ENCODE measurements at regions of chr9 and their contacts with region 1.

Region 1: GRCh38 chr9:3441197-3441816 is 84.5 kb downstream of the RFX3 start:
- DNase-seq: peak; percentile 80
- H3K4me3 ChIP-seq: no peak overlapping the region
- H3K27ac ChIP-seq: no peak overlapping the region
- H3K4me1 ChIP-seq: no peaks in the 10 kb centered on the region
- H3K27me3 ChIP-seq: no peaks in the 10 kb centered on the region
- CTCF ChIP-seq: peak; percentile 42 to 63
- POLR2A ChIP-seq: no peak

Region 2: GRCh38 chr9:3181049-3181953 is 260.0 kb before region 1 on chr9:
- CTCF ChIA-PET with region 1: interaction called, 11 read pairs
- POLR2A ChIA-PET with region 1: no interaction called
- dilution Hi-C with region 1: no loop called
- intact Hi-C with region 1: no loop called
- DNase-seq: no peak
- H3K4me3 ChIP-seq: no peak overlapping the region
- H3K27ac ChIP-seq: no peak overlapping the region
- H3K4me1 ChIP-seq: no peaks in the 10 kb centered on the region
- H3K27me3 ChIP-seq: peaks cover 29 to 33% of the 10 kb centered on the region in 2 experiments
- CTCF ChIP-seq: no peak
- POLR2A ChIP-seq: no peak

Region 3: DNA sequence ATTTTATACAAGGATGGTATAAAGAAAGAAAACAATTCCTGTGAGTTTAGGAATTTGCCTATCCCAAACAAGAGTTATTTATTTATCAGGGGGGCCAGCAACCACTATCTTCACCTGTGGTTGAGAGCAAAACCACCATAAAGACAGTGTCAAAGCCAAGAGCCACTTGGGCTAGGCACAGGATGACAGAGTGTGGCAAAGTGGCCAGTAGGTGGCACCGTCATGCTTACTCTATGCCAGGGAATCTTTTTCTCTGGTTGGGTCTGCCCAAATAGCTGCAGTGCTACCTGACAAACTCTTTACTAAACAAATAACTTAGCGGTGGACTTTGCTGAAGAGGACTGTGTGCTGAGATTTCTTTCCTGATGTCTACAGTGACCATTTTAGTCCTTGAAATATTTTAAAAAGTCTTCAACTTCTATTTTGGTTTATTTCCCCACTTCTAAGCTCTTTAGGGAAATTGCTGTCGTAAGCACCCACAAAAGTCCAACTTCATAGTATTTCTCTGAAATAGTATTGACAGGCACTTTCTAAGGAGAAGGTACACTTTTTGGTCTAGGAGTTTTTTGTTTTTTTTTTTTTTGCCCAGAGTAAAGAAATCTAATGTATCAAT is 200.5 kb before region 1 on chr9:
- CTCF ChIA-PET with region 1: interaction called, 566 read pairs
- POLR2A ChIA-PET with region 1: interaction called, 5 read pairs
- dilution Hi-C with region 1: no loop called
- intact Hi-C with region 1: loop called (anchors 1 kb)
- DNase-seq: peak; percentile 67
- H3K4me3 ChIP-seq: no peak overlapping the region
- H3K27ac ChIP-seq: no peak overlapping the region
- H3K4me1 ChIP-seq: no peaks in the 10 kb centered on the region
- H3K27me3 ChIP-seq: no peaks in the 10 kb centered on the region
- CTCF ChIP-seq: peak; percentile 77 to 88
- POLR2A ChIP-seq: no peak

Region 4: GRCh38 chr9:3292311-3292710 is 149.0 kb before region 1 on chr9:
- CTCF ChIA-PET with region 1: interaction called, 15 read pairs
- POLR2A ChIA-PET with region 1: no interaction called
- dilution Hi-C with region 1: no loop called
- intact Hi-C with region 1: no loop called
- DNase-seq: no peak
- H3K4me3 ChIP-seq: no peak overlapping the region
- H3K27ac ChIP-seq: no peak overlapping the region
- H3K4me1 ChIP-seq: no peaks in the 10 kb centered on the region
- H3K27me3 ChIP-seq: no peaks in the 10 kb centered on the region
- CTCF ChIP-seq: no peak
- POLR2A ChIP-seq: no peak

Region 5: DNA sequence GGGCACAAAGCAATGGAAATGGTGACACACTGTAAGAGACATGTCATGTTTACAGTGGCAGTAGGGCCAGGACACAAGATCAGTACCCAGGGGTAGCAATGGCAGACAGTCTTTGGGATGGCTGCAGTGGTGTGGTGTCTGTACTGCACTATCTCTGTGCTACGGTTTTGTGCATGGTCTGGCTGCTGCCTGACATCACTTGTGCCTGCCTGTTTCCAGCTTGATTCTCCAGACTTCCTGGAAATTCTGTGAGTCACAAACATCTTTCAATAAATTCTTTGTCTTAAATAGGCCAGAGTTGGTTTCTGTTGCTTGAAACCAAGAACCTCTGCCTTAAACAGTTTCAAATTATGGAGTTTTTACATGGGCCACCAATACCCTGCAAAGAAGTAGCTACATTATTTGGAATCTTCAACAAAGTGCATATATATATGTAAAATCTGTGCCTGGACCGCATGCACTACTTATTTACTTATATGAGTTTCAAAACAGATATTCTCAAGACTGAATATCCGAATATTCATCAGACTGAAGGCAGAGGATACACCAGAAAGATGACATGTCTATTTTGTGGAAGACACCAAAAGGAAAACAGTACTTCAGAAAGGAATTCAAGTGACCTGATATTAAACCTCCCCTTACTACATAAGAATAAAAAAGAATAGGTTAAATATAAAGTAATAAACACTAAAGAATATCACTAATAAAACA is 103.6 kb before region 1 on chr9:
- CTCF ChIA-PET with region 1: interaction called, 53 read pairs
- POLR2A ChIA-PET with region 1: no interaction called
- dilution Hi-C with region 1: no loop called
- intact Hi-C with region 1: no loop called
- DNase-seq: peak; percentile 83
- H3K4me3 ChIP-seq: no peak overlapping the region
- H3K27ac ChIP-seq: peak overlapping the region; percentile 51
- H3K4me1 ChIP-seq: peaks cover 31% of the 10 kb centered on the region
- H3K27me3 ChIP-seq: no peaks in the 10 kb centered on the region
- CTCF ChIP-seq: no peak
- POLR2A ChIP-seq: no peak

Region 6: GRCh38 chr9:3451956-3452355 is 10.6 kb after region 1 on chr9:
- CTCF ChIA-PET with region 1: interaction called, 13 read pairs
- POLR2A ChIA-PET with region 1: no interaction called
- dilution Hi-C with region 1: no loop called
- intact Hi-C with region 1: no loop called
- DNase-seq: no peak
- H3K4me3 ChIP-seq: no peak overlapping the region
- H3K27ac ChIP-seq: no peak overlapping the region
- H3K4me1 ChIP-seq: no peaks in the 10 kb centered on the region
- H3K27me3 ChIP-seq: no peaks in the 10 kb centered on the region
- CTCF ChIP-seq: no peak
- POLR2A ChIP-seq: no peak

Region 7: DNA sequence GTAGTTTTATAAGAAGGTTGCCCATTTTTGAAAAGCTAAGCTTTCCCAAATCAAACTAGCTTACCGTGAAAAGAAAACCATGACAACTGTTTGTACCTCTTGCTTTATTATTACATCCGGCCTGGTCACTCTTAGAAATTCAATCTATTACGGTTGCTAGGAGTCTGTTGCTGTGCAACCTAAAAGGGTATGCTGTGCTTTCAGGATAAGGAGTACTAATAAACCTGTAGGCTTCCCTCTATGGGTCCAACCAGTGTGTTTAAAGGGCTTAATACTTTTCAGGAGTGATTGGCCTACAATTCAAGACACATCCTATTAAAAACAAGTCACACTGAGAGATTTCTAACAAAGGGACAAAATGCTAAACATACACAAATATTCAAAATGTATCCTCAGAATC is 57.4 kb after region 1 on chr9:
- CTCF ChIA-PET with region 1: interaction called, 10 read pairs
- POLR2A ChIA-PET with region 1: no interaction called
- dilution Hi-C with region 1: no loop called
- intact Hi-C with region 1: no loop called
- DNase-seq: no peak
- H3K4me3 ChIP-seq: no peak overlapping the region
- H3K27ac ChIP-seq: no peak overlapping the region
- H3K4me1 ChIP-seq: peaks cover 22% of the 10 kb centered on the region
- H3K27me3 ChIP-seq: no peaks in the 10 kb centered on the region
- CTCF ChIP-seq: no peak
- POLR2A ChIP-seq: no peak

Region 8: DNA sequence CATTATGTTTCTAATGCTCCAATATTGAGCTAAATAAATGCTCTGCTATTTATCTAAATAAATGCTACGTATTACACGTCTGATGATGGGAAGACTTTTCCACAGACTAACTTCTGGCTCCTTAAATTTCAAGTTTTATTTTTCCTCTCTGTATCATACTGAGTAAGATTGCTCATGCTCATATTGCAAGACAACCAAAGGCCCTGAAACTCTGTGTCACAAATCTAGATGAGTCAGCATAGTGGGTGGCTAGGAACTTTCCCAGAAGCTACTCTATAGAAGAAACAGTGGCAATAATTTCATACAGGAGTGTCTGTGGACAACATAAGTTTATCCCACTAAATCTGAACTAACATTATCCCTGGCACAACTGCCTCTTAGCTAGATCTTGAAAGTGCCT is 137.5 kb after region 1 on chr9:
- CTCF ChIA-PET with region 1: no interaction called
- POLR2A ChIA-PET with region 1: no interaction called
- dilution Hi-C with region 1: no loop called
- intact Hi-C with region 1: no loop called
- DNase-seq: no peak
- H3K4me3 ChIP-seq: no peak overlapping the region
- H3K27ac ChIP-seq: no peak overlapping the region
- H3K4me1 ChIP-seq: no peaks in the 10 kb centered on the region
- H3K27me3 ChIP-seq: no peaks in the 10 kb centered on the region
- CTCF ChIP-seq: no peak
- POLR2A ChIP-seq: no peak

Region 9: DNA sequence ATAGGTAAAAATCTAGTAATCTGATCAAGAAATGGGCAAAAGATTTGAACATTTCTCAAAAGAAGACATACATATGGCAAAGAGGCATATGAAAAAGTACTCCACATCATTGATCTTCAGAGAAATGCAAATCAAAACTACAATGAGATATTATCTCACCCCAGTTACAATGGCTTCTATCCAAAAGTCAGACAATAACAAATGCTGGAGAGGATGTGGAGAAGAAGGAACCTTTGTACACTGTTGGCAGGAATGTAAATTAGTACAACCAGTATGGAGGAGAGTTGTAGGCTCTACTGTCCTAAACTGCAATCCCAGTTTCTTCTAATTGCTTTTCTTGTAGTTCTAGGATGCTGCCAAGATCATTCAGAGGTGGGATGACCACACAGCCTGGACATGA is 278.0 kb after region 1 on chr9:
- CTCF ChIA-PET with region 1: no interaction called
- POLR2A ChIA-PET with region 1: no interaction called
- dilution Hi-C with region 1: no loop called
- intact Hi-C with region 1: no loop called
- DNase-seq: no peak
- H3K4me3 ChIP-seq: no peak overlapping the region
- H3K27ac ChIP-seq: no peak overlapping the region
- H3K4me1 ChIP-seq: no peaks in the 10 kb centered on the region
- H3K27me3 ChIP-seq: no peaks in the 10 kb centered on the region
- CTCF ChIP-seq: no peak
- POLR2A ChIP-seq: no peak

Measured in endothelial cell of umbilical vein (primary cell).